GM13977 (cell line): ENCODE measurements at regions of chr3 and their contacts with region 1.

Region 1: DNA sequence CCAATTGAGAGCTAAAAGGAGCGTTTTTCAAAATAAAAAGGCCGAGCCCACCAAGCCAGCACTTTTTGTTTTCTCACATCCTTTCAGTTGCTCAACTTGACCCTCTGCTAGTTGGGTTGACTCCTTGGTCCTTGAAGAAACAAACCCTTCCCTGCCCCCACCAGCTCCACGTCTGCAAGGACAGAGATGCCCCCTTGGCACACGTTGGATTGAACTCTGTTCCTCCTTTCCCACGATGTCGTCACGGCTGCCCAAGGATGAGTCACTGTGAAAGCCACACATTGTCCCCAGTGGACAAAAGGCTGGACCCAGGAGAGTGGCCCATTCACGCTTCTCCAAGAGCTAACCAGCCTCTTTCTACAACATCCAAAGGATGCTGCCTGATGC is 43.0 kb upstream of the SPATA12 start:
- DNase-seq: no peak
- CTCF ChIP-seq: no peak

Region 2: DNA sequence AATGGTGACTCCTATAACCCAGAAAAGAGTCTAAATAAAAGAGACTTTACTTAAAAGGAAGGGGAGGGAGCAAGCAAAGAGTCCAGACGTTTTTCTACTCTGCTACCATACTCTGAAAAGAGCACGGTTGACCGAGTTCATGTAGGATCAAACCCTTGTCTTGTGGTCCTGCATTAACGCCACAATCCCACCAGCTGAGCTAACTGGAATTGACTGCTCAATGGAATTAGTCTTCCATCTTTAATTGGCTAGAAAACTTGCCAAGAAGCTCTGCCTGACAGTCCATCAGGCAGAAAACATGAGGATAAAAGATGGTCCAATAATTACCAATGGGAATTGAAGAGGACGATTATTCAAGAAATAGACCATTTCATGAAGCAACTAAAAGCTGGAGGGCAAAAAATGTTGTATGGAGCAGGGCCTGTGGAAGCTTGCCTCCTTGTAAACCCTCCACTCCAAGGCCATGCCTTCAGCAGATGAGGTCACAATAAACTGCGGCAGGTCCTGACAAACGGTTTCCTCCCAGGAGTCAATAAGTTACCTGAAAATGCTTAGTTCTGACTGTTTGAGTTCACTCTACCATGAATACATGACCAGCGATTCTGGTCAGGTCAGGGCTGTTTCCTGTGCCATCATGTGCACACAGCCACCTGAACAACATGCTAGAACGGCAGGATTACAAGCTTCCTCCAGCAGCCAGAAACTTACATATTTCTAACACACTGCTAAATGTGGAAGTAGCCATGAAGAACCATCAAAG is 180.1 kb before region 1 on chr3:
- in situ Hi-C with region 1: no loop called
- DNase-seq: no peak
- CTCF ChIP-seq: no peak

Region 3: DNA sequence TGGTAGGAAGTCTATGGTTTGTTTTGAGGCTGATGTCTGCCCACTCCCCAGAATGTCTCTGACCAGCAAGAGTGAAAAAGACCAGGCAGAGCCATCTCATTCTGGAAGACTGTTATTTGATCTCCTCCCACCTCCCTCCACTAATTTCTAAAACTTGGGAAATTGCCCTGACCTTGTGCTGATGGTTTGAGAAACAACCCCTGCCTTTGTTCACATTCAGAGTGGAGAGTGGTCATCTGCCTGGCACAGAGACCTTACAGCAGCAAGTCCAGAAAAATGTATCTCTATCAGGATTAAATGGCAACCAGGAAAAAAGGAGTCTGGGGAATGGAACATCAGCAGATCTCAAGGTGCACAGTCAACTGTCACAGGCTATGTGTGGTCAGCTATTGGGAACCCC is 68.7 kb after region 1 on chr3:
- in situ Hi-C with region 1: loop called (anchors 10 kb)
- DNase-seq: no peak
- CTCF ChIP-seq: no peak

Region 4: GRCh38 chr3:57244946-57245345 is 227.5 kb after region 1 on chr3:
- in situ Hi-C with region 1: no loop called
- DNase-seq: no peak
- CTCF ChIP-seq: no peak

Region 5: GRCh38 chr3:57743496-57743895 is 726.0 kb after region 1 on chr3:
- in situ Hi-C with region 1: no loop called
- DNase-seq: no peak
- CTCF ChIP-seq: no peak